ENCODE measurements at regions of chr4 and their contacts with region 1.

Region 1: DNA sequence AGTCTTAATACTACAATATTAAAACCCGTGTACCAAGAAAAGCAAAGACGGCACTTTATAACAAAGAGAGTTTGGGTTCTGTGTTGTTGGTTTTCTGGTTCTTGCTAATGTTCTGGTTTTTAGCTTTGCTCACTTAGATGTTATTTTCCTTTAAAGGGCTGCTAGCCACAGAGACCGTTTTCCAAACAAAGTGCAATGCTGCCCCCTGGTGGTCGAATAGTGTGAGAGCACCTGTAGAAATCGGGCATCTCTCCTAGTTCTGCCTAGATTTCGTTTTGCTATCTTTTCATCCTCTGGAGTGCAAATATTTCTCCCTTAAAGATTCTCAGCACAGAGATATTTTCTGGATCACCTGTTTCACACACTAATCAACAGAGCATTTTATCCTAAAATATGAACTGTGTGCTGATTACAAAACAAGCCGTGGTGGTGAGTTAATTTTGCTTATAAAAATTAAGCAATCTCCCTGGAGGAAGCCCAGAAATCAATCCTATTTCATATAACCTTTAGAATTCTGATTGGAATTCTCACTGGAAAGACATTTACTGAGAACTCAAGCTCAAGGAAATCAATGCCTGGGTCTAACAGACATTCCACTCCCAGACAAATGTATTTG is 334.5 kb upstream of the NOCT start:
- DNase-seq: peak; percentile 77
- H3K4me3 ChIP-seq: no peak overlapping the region
- H3K27ac ChIP-seq: no peak overlapping the region
- H3K4me1 ChIP-seq: no peaks in the 10 kb centered on the region
- H3K27me3 ChIP-seq: no peaks in the 10 kb centered on the region
- CTCF ChIP-seq: peak; percentile 94

Region 2: DNA sequence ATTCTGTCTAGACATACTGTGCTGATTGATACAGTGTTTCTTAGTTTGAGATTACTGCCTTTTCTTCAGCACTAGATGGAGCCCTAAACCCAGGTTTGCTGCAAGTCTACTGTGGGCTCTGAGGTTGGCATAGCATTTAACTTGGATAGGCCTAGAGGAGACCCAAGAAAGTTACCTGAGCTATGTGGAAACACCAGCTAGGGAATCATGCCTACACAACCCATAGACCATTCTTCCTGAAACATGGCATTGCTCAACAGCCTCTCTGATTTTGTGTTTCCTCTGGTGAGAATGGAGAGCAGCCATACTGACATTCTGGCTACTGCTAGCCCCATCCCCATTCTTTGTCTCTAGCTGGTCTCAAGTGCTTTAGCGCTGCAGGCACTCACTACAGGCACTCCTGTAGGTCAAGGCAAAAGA is 861.1 kb before region 1 on chr4:
- intact Hi-C with region 1: loop called (anchors 10 kb)
- DNase-seq: no peak
- H3K4me3 ChIP-seq: no peak overlapping the region
- H3K27ac ChIP-seq: no peak overlapping the region
- H3K4me1 ChIP-seq: no peaks in the 10 kb centered on the region
- H3K27me3 ChIP-seq: no peaks in the 10 kb centered on the region
- CTCF ChIP-seq: no peak

Region 3: GRCh38 chr4:138035781-138036258 is 645.3 kb before region 1 on chr4:
- intact Hi-C with region 1: loop called (anchors 5 kb)
- DNase-seq: no peak
- H3K4me3 ChIP-seq: no peak overlapping the region
- H3K27ac ChIP-seq: no peak overlapping the region
- H3K4me1 ChIP-seq: no peaks in the 10 kb centered on the region
- H3K27me3 ChIP-seq: no peaks in the 10 kb centered on the region
- CTCF ChIP-seq: peak; percentile 55

Region 4: DNA sequence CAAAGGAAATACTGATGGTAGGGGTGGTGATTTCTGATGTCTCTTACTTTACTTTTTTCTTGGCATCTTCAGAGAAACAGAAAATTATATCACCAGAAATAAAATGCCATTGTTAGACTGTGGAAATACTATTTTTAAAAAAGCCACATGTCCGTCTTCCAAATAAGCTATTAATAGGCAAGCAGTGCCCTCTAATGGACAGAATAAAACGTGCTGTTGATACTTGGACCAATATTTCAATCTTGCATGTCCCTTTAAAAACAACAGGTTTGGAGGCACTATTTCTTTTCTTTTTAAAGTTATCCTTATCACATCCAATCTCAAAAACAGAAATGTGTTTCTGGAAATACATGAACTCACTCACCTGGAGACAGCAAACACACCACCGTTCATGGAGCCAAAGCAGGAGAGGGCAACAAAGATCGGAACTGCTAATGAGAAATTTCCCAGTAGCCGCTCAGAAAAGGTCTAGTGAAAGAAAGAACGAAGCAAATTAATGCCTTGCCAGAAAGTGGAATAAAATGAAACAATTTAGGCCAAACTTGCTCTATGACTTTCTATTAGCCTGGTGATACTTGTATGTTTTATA is 498.2 kb before region 1 on chr4:
- intact Hi-C with region 1: loop called (anchors 5 kb)
- DNase-seq: no peak
- H3K4me3 ChIP-seq: no peak overlapping the region
- H3K27ac ChIP-seq: no peak overlapping the region
- H3K4me1 ChIP-seq: no peaks in the 10 kb centered on the region
- H3K27me3 ChIP-seq: no peaks in the 10 kb centered on the region
- CTCF ChIP-seq: peak; percentile 40

Region 5: DNA sequence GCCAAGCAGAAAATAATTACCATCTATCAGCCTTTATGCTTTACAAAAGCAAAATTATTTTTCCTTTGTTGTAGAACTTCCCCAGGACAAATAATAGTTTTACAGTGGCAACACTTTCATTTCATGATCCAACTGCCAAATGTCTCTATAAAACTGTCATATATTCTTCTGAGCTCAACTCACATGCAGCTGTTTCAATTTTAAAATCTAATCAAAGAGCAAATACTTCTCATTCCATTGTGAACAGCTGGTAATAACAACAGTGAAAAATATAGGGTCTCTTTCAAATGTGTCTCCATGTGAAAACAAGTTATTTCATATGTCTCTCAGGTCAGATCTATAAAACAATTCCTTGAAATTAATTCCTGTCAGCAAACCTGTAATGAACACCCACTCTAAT is 168.3 kb before region 1 on chr4:
- intact Hi-C with region 1: no loop called
- DNase-seq: no peak
- H3K4me3 ChIP-seq: no peak overlapping the region
- H3K27ac ChIP-seq: no peak overlapping the region
- H3K4me1 ChIP-seq: no peaks in the 10 kb centered on the region
- H3K27me3 ChIP-seq: no peaks in the 10 kb centered on the region
- CTCF ChIP-seq: no peak

Region 6: GRCh38 chr4:138870737-138871554 is 189.8 kb after region 1 on chr4:
- intact Hi-C with region 1: loop called (anchors 10 kb)
- DNase-seq: peak; percentile 65
- H3K4me3 ChIP-seq: no peak overlapping the region
- H3K27ac ChIP-seq: no peak overlapping the region
- H3K4me1 ChIP-seq: no peaks in the 10 kb centered on the region
- H3K27me3 ChIP-seq: no peaks in the 10 kb centered on the region
- CTCF ChIP-seq: peak; percentile 84

Region 7: DNA sequence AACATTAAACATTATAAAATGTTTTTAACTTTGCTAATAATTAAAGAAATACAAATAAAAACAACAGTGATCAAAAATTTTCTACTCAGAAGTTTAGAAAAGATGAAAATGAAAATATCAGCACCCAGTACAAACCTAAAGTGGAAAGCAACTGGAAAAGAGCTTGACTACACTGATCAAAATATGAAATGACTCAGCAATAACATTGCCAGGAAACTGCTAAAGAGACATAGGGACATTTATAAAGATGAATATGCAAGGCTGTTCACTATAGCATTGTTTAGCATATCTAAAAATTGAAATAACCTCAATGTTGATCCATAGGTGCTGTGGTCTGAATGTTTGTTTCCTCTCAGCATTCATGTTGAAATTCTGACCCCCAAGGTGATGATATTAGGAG is 246.0 kb after region 1 on chr4:
- intact Hi-C with region 1: loop called (anchors 10 kb)
- DNase-seq: no peak
- H3K4me3 ChIP-seq: no peak overlapping the region
- H3K27ac ChIP-seq: no peak overlapping the region
- H3K4me1 ChIP-seq: no peaks in the 10 kb centered on the region
- H3K27me3 ChIP-seq: no peaks in the 10 kb centered on the region
- CTCF ChIP-seq: no peak